Activated T-helper 1 cell treated with anti-CD3 and anti-CD28 coated beads, Interleukin-12 subunit alpha, Interleukin-12 subunit beta, Interleukin-2, Interleukin-4 antibody, amounts not matched to agents 30 ng/mL and 10 ng/mL and 1 ng/mL, durations not matched to agents 14 hours and 24 hours and 36 hours (primary cell): ENCODE measurements at regions of chr10 and their contacts with region 1.

Region 1: DNA sequence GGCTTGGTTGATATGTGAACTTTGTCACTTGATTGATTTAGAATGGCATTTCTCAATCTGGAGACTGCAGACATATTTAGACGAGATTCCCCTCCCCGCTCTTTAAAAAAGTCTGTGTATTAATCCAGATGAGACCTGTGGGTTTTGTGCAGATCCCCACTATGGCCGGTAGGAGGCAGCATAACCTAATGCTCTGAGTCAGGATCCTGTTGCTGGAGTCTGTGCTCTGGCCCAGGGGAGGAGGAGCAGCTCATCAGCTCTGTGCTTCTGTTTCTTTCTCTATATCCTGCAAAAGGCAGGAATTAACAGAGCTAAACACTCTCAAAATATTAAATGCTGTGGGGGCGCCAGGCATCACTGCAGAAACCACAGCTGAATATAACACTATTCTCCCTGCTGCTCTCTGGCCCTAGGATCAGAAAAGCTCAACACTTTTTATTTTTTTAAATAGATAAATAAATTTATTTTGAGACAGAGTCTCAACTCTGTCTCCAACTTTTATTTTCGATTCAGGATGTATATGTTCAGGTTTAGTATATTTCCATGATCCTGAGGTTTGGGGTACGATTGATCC is 23.9 kb upstream of the SEPHS1 start:
- DNase-seq: peak; percentile 63
- H3K4me3 Mint-ChIP-seq: no peak overlapping the region
- H3K27ac Mint-ChIP-seq: no peak overlapping the region
- H3K4me1 Mint-ChIP-seq: no peaks in the 10 kb centered on the region
- H3K27me3 Mint-ChIP-seq: peaks cover 10% of the 10 kb centered on the region

Region 2: GRCh38 chr10:12934777-12935176 is 437.2 kb before region 1 on chr10:
- intact Hi-C with region 1: no loop called
- DNase-seq: no peak
- H3K4me3 Mint-ChIP-seq: no peak overlapping the region
- H3K27ac Mint-ChIP-seq: no peak overlapping the region
- H3K4me1 Mint-ChIP-seq: no peaks in the 10 kb centered on the region
- H3K27me3 Mint-ChIP-seq: peaks cover 11% of the 10 kb centered on the region

Region 3: DNA sequence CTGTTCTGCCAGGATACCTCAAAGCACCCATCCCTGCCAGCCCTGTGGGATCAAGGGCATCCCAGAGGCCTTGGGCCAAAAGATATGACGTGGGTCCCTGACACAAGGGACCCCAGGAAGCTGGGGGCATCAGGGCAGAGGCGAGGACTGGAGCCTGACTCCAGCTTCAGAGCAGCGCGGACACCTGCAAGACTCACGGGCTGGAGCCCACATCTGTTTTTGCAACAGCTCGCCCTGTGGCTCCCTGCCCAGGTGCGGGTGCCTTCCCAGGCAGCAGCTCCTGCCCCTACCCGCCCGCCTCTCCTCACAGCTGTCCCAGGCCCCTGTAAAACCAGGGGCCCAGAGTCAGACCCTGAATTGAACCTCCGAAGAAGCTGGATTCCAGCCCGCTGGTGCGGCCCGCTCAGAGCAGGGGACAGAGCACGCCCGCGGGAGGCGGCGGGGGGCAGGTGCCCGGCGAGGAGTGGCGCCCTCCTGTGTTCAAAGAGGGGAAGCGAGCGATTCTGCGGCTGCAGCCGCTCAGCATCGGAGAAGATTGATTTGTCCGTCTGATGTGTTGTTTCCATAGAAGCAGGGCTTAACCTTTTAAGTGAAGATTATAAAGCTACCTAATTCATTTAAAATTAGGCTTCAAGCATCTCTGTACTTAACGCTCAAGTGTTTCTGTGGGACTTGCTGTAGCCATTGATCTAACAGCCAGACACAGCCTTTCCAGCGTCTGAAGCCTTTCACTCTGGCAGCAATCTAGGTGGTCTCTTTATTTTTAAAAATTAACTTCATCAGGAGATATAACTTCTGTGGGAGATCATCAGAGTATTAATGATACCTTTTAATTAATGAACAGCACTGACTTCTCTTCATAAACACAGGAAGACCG is 68.4 kb after region 1 on chr10:
- intact Hi-C with region 1: loop called (anchors 1 kb)
- DNase-seq: peak; percentile 43
- H3K4me3 Mint-ChIP-seq: peak overlapping the region; percentile 58
- H3K27ac Mint-ChIP-seq: no peak overlapping the region
- H3K4me1 Mint-ChIP-seq: peaks cover 8% of the 10 kb centered on the region
- H3K27me3 Mint-ChIP-seq: peaks cover 30% of the 10 kb centered on the region

Region 4: GRCh38 chr10:13536674-13537366 is 164.8 kb after region 1 on chr10:
- intact Hi-C with region 1: loop called (anchors 1 kb)
- DNase-seq: no peak
- H3K4me3 Mint-ChIP-seq: no peak overlapping the region
- H3K27ac Mint-ChIP-seq: no peak overlapping the region
- H3K4me1 Mint-ChIP-seq: no peaks in the 10 kb centered on the region
- H3K27me3 Mint-ChIP-seq: peaks cover 29% of the 10 kb centered on the region

Region 5: GRCh38 chr10:13586676-13587355 is 214.8 kb after region 1 on chr10 and contains the start of gene PRPF18:
- intact Hi-C with region 1: loop called (anchors 1 kb)
- DNase-seq: peak; percentile 89
- H3K4me3 Mint-ChIP-seq: peak within 1 kb of the TSS; percentile 100
- H3K27ac Mint-ChIP-seq: peak within 1 kb of the TSS; percentile 98
- H3K4me1 Mint-ChIP-seq: peaks cover 16% of the 10 kb centered on the region
- H3K27me3 Mint-ChIP-seq: peaks cover 11% of the 10 kb centered on the region
- total RNA-seq, gene PRPF18: 24.8 and 25.6 TPM in 2 replicates

Region 6: GRCh38 chr10:13649844-13650521 is 278.0 kb after region 1 on chr10:
- intact Hi-C with region 1: loop called (anchors 10 kb)
- DNase-seq: no peak
- H3K4me3 Mint-ChIP-seq: no peak overlapping the region
- H3K27ac Mint-ChIP-seq: no peak overlapping the region
- H3K4me1 Mint-ChIP-seq: peaks cover 13% of the 10 kb centered on the region
- H3K27me3 Mint-ChIP-seq: no peaks in the 10 kb centered on the region

Region 7: DNA sequence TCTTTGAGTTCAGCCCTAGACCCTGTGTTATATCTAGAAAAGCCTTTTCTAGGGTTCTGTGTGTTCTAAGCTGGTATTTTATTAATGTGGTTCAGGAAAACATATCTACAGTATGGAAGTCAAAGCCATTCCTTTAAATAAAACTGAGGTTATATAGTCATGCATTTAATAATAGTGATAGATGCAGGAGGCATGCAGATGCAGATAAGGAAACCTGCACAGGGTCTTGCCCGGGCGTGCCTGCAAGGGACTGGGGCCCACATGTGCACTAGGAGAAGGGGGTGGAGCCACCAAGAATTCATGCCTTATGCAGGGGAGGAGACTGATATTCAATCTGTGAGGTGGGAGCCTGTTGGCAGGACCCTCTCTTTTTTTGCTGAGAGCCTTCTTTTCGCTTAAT is 386.3 kb after region 1 on chr10:
- intact Hi-C with region 1: no loop called
- DNase-seq: no peak
- H3K4me3 Mint-ChIP-seq: no peak overlapping the region
- H3K27ac Mint-ChIP-seq: no peak overlapping the region
- H3K4me1 Mint-ChIP-seq: peaks cover 5% of the 10 kb centered on the region
- H3K27me3 Mint-ChIP-seq: peaks cover 4% of the 10 kb centered on the region

Region 8: DNA sequence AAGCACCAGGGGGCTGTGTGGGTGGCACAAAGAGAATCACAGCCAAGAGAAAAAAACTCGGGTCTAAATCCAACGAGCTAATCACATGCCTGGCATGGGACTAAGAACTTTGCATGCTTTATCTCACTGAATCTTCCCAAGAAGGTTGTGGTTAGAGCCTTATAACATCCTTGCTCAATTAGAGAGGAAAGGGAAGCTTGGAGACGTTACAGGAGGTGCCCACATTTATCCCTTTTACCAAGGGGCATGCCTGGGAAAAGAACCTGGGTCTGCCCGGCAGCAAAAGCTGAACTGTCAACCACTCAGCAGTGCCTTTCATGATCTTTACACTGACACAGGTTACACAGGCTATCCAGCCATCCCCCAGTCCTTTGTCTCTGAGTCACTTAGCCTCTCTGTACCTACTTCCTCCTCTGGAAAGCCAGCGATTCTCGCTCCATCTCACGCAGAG is 404.9 kb after region 1 on chr10:
- intact Hi-C with region 1: loop called (anchors 1 kb)
- DNase-seq: no peak
- H3K4me3 Mint-ChIP-seq: no peak overlapping the region
- H3K27ac Mint-ChIP-seq: no peak overlapping the region
- H3K4me1 Mint-ChIP-seq: peaks cover 7% of the 10 kb centered on the region
- H3K27me3 Mint-ChIP-seq: peaks cover 17% of the 10 kb centered on the region